Natural killer cell (primary cell): ENCODE measurements at regions of chr11 and their contacts with region 1.

Region 1: GRCh38 chr11:77091146-77091940 is 11.3 kb upstream of the OMP start:
- DNase-seq: peak; percentile 76 to 87
- ATAC-seq: peak; percentile 77 to 100 (median 98)
- H3K4me3 ChIP-seq: no peak overlapping the region
- H3K4me3 Mint-ChIP-seq: no peak overlapping the region
- H3K27ac ChIP-seq: no peak overlapping the region
- H3K27ac Mint-ChIP-seq: no peak overlapping the region
- H3K4me1 ChIP-seq: no peaks in the 10 kb centered on the region
- H3K4me1 Mint-ChIP-seq: peaks cover 5 to 8% of the 10 kb centered on the region in 2 donors
- H3K27me3 ChIP-seq: no peaks in the 10 kb centered on the region
- H3K27me3 Mint-ChIP-seq: no peaks in the 10 kb centered on the region
- CTCF ChIP-seq: peak; percentile 96

Region 2: DNA sequence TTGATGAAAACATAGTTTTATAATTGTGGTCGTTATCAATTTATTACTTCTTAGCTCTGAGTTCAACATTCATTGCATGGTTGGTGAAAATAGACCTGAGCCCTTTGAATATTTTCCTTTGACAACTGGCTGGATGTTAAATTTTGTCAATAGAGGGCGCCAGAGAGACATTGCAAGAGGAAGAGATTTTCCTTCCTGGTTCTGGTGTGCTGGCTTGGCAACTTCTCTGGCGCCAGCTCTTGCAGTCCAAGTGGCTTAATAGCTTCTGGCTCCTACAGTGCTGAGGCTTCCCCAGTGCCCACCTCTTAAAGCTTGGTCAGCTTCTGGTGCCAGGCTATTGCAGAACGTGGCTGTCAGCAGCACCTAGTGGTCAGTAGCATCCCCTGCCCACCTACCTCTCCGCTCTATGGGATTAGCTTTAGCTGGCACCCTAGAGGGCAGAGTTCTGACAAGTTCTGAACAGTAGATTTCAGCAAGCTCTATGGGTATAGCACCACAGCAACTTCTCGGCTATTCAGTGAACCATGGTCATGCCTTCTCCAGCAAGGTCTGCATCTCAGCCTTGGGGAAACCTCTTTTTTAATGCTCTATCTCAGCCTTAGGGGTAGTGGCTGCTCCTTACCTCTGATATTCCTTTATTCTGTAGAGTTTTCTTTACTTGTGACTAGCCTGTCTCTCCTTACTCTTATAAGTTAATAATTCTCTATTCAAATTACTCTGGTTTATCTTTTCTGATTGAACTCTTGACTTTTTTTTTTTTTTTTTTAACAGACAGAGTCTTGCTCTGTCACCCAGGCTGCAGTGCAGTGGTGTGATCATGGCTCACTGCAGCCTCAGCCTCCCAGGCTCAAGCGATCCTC is 171.2 kb before region 1 on chr11:
- intact Hi-C with region 1: loop called (anchors 5 kb)
- DNase-seq: peak; percentile 36 to 86
- ATAC-seq: peak; percentile 75 to 84 (median 78)
- H3K4me3 ChIP-seq: no peak overlapping the region
- H3K4me3 Mint-ChIP-seq: peak overlapping the region; percentile 75
- H3K27ac ChIP-seq: no peak overlapping the region
- H3K27ac Mint-ChIP-seq: peak overlapping the region in 1 of 2 donors; percentile 35
- H3K4me1 ChIP-seq: peaks cover 4% of the 10 kb centered on the region
- H3K4me1 Mint-ChIP-seq: peaks cover 11 to 12% of the 10 kb centered on the region in 2 donors
- H3K27me3 ChIP-seq: no peaks in the 10 kb centered on the region
- H3K27me3 Mint-ChIP-seq: no peaks in the 10 kb centered on the region
- CTCF ChIP-seq: peak; percentile 89

Region 3: DNA sequence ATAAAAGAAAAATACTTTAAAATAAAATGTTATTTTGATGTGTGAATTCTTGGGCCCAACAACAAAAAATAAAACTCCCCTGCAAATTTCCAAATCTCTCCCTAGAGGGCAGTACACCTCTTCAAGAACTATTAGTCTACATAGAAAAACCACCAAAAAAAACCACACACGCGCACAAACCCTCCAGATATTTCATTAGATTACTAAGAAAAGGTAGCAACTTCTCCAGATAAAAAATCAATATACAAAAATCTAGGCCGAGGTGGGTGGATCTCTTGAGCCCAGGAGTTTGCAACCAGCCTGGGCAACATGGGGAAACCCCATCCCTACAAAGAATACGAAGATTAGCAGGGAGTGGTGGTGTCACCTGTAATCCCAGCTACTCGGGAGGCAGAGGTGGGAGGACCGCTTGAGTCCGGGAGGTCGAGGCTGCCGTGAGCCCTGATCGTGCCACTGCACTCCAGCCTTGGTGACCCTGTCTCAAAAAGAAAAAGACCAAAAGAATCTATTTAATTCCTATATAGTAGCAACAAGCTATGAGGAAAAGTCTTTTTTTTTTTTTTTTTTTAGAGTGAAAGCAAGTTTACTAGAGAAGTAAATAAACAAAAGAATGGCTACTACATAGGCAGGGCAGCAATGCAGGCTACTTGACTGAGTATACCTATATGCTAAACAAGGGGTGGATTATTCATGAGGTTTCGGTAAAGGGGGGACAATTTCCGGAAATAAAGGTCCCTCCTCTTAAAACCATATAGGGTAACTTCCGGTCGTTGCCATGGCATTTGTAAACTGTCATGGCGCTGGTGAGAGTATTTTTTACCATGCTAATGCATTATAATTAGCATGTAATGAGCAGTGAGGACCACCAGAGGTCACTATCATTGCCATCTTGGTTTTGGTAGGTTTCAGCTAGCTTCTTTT is 44.1 kb before region 1 on chr11:
- intact Hi-C with region 1: loop called (anchors 1 kb)
- DNase-seq: peak; percentile 57 to 97
- ATAC-seq: peak; percentile 89 to 92 (median 92)
- H3K4me3 ChIP-seq: peak overlapping the region; percentile 36
- H3K4me3 Mint-ChIP-seq: peak overlapping the region; percentile 83
- H3K27ac ChIP-seq: peak overlapping the region; percentile 7
- H3K27ac Mint-ChIP-seq: peak overlapping the region; percentile 47 to 74
- H3K4me1 ChIP-seq: peaks cover 7% of the 10 kb centered on the region
- H3K4me1 Mint-ChIP-seq: peaks cover 13 to 20% of the 10 kb centered on the region in 2 donors
- H3K27me3 ChIP-seq: peaks cover 7% of the 10 kb centered on the region
- H3K27me3 Mint-ChIP-seq: peaks cover 18 to 23% of the 10 kb centered on the region in 2 donors
- CTCF ChIP-seq: peak; percentile 62

Region 4: DNA sequence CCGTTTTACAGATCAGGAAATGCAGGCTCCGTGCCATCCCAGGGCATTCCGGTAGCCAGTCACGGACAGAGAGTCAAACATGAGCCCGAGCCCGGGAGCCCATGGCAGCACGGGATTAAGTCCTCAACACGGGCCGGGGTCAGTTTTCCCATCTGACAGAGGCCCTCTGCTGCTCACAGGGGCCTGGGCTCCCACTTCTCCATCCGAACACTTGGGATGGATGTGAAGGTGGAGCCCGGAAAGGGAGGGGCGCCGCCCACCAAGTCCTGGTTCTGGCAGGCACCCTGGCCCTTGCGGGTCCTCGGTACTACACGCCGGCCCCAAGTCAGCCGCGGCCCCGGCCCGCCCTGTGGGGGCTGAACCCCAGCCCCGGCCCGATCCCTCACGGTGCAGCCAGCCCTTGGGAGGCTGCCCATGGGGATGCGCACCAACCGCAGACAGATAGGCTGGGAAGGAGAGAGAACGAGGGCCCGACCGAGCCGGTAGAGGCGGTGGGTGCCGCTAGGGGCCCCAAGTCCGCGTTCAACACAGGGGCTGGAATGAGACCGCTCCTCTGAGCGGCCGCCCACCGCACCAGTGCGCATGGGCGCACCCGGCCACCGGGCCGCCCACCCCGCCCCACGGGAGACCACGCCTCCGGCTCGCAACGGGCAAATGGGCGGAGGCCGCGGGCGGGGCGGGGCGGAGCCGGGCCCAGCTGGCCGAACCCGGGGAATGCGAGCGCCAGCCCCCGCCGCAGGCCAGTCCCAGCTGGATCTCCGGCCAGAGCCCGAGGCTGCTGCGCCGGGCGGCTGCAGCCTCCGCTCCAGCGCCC is 24.9 kb before region 1 on chr11 and contains the start of gene CAPN5:
- intact Hi-C with region 1: loop called (anchors 1 kb)
- DNase-seq: peak; percentile 89 to 94
- ATAC-seq: peak; percentile 96 to 97 (median 97)
- H3K4me3 ChIP-seq: peak within 1 kb of the TSS; percentile 59
- H3K4me3 Mint-ChIP-seq: peak within 1 kb of the TSS; percentile 91
- H3K27ac ChIP-seq: no peak within 1 kb of the TSS
- H3K27ac Mint-ChIP-seq: peak within 1 kb of the TSS; percentile 78 to 83
- H3K4me1 ChIP-seq: peaks cover 27% of the 10 kb centered on the region
- H3K4me1 Mint-ChIP-seq: peaks cover 29 to 47% of the 10 kb centered on the region in 2 donors
- H3K27me3 ChIP-seq: peaks cover 10% of the 10 kb centered on the region
- H3K27me3 Mint-ChIP-seq: peaks cover 9 to 11% of the 10 kb centered on the region in 2 donors
- CTCF ChIP-seq: peak; percentile 51
- total RNA-seq, gene CAPN5: 32.3 to 34.5 (median 34.3) TPM